Colonic mucosa (tissue), 4 donors: ENCODE measurements at regions of chr3 and their contacts with region 1.

Region 1: GRCh38 chr3:48655606-48656005 is 7.1 kb downstream of the CELSR3 start:
- DNase-seq: no peak
- H3K4me3 ChIP-seq: peak overlapping the region; percentile 78
- H3K27ac ChIP-seq: no peak overlapping the region
- H3K4me1 ChIP-seq: no peaks in the 10 kb centered on the region
- H3K27me3 ChIP-seq: peaks cover 1% of the 10 kb centered on the region
- CTCF ChIP-seq: no peak

Region 2: DNA sequence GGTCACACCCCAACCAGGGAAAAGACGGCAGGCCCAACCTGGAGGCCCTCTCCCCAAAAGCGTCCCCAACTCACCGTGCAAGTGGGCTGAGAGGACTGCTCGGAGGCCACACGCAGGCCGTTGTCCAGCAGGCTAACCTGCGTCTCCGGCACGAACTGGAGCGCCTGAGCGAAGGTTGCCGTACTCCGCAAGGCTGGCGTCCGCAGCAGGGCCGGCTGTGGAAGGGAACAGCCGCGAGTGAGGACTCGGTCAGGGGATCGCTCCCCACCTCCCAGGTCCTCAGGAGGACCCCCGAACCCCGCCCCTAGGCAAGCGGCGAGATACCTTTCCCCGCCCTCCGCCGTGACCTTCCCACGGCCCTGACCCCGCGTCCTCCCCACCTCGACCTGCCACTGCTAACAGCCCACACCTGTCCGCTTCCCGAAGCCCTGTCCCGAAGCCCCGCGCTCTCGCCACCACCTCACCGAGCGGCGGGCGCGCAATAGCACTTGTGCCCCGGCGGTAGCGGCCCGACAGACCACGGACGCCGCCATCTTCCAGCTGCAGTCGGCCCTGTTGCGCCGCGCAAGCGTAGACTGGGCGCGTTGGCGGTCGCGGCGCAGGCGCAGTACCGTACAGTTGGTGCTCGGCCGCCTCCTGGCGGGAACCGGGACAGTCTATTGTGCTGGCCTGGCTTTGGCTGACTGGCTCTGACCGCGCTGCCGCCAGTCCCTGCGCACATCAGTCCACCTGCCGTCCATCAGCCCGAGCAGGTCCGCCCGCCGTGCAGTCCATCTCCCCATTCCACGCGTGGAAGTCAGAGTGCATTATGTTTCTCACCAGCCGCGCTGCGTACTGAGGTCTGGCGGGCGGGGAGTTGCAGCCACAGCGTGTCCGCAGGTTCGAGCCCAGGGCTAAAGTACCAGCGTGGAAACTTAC is 46.3 kb before region 1 on chr3 and contains the start of gene UQCRC1:
- intact Hi-C with region 1: loop called (anchors 2 kb)
- DNase-seq: peak; percentile 92
- H3K4me3 ChIP-seq: peak within 1 kb of the TSS; percentile 75
- H3K27ac ChIP-seq: peak within 1 kb of the TSS; percentile 64
- H3K4me1 ChIP-seq: no peaks in the 10 kb centered on the region
- H3K27me3 ChIP-seq: no peaks in the 10 kb centered on the region
- CTCF ChIP-seq: peak; percentile 45
- total RNA-seq, gene UQCRC1: 682 to 753 TPM